Testis (tissue), 5 donors: ENCODE measurements at regions of chr1 and their contacts with region 1.

Region 1: GRCh38 chr1:174262349-174263241 is 103.3 kb downstream of the RABGAP1L start:
- DNase-seq: no peak
- H3K4me3 ChIP-seq: no peak overlapping the region
- H3K27ac ChIP-seq: no peak overlapping the region
- H3K4me1 ChIP-seq: no peaks in the 10 kb centered on the region
- H3K27me3 ChIP-seq: no peaks in the 10 kb centered on the region
- CTCF ChIP-seq: peak; percentile 24 to 48 (median 46)
- POLR2A ChIP-seq: no peak

Region 2: GRCh38 chr1:174726167-174726879 is 463.7 kb after region 1 on chr1:
- intact Hi-C with region 1: loop called (anchors 10 kb)
- DNase-seq: no peak
- H3K4me3 ChIP-seq: no peak overlapping the region
- H3K27ac ChIP-seq: no peak overlapping the region
- H3K4me1 ChIP-seq: no peaks in the 10 kb centered on the region
- H3K27me3 ChIP-seq: no peaks in the 10 kb centered on the region
- CTCF ChIP-seq: peak in 1 of 3 experiments; percentile 55
- POLR2A ChIP-seq: no peak

Region 3: GRCh38 chr1:174743654-174744561 is 481.3 kb after region 1 on chr1:
- intact Hi-C with region 1: loop called (anchors 10 kb)
- DNase-seq: no peak
- H3K4me3 ChIP-seq: no peak overlapping the region
- H3K27ac ChIP-seq: no peak overlapping the region
- H3K4me1 ChIP-seq: no peaks in the 10 kb centered on the region
- H3K27me3 ChIP-seq: no peaks in the 10 kb centered on the region
- CTCF ChIP-seq: peak; percentile 10 to 62 (median 30)
- POLR2A ChIP-seq: no peak